ENCODE measurements at regions of chr2 and their contacts with region 1.

Region 1: GRCh38 chr2:42909966-42910365 is 117.6 kb upstream of the HAAO start:
- DNase-seq: no peak
- ATAC-seq: no peak
- H3K4me3 ChIP-seq: no peak overlapping the region
- H3K27ac ChIP-seq: no peak overlapping the region
- H3K4me1 ChIP-seq: peaks cover 9% of the 10 kb centered on the region; the same call in 1 of the 2 replicates
- H3K27me3 ChIP-seq: no peaks in the 10 kb centered on the region
- CTCF ChIP-seq: no peak

Region 2: GRCh38 chr2:42639340-42640077 is 270.5 kb before region 1 on chr2:
- CTCF ChIA-PET with region 1: no interaction called
- POLR2A ChIA-PET with region 1: no interaction called
- intact Hi-C with region 1: no loop called
- DNase-seq: no peak
- ATAC-seq: no peak
- H3K4me3 ChIP-seq: no peak overlapping the region
- H3K27ac ChIP-seq: no peak overlapping the region
- H3K4me1 ChIP-seq: no peaks in the 10 kb centered on the region
- H3K27me3 ChIP-seq: no peaks in the 10 kb centered on the region
- CTCF ChIP-seq: no peak

Region 3: GRCh38 chr2:42925742-42926433 is 15.9 kb after region 1 on chr2:
- CTCF ChIA-PET with region 1: no interaction called
- POLR2A ChIA-PET with region 1: interaction called, 11 read pairs
- intact Hi-C with region 1: no loop called
- DNase-seq: no peak
- ATAC-seq: no peak
- H3K4me3 ChIP-seq: no peak overlapping the region
- H3K27ac ChIP-seq: no peak overlapping the region
- H3K4me1 ChIP-seq: no peaks in the 10 kb centered on the region
- H3K27me3 ChIP-seq: no peaks in the 10 kb centered on the region
- CTCF ChIP-seq: no peak